Heart right ventricle (tissue), 16 donors: ENCODE measurements at regions of chr22 and their contacts with region 1.

Region 1: DNA sequence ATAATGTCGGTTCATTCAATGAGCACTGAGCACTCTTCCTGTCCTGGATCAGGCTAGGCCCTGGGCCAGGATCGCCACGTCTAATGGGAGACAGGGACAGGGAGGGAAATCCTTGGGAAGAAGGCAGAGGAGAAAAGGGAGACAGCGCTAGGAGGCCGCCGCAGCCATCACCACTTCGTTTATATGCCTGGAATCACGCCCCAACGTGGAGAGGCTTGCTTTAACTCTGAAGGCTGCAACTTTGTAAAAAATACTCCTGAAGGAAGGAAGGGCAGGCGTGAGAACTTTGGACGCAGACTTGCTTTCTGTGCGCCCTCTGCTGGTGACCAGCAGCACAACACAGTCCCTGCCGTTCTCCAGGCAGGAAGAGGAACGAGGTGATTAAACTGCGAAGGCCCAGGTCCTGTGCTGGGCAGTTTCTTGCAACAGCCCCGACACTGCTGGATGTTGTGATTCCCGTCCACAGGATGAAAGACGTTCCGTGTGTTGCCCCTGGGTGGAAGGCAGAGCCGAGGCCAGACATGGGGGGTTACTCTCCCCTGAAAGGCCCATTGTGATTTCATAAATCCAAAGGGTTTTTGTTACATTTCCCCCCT is 22.1 kb downstream of the RIBC2 start:
- DNase-seq: peak; percentile 87 to 89
- ATAC-seq: peak; percentile 90 to 97 (median 94)
- H3K4me3 ChIP-seq: peak overlapping the region in 5 of 10 donors; percentile 18 to 35 (median 31)
- H3K27ac ChIP-seq: peak overlapping the region in 8 of 10 donors; percentile 15 to 78 (median 60)
- H3K4me1 ChIP-seq: peaks cover 0 to 14% (median 8%) of the 10 kb centered on the region in 9 donors
- H3K27me3 ChIP-seq: peaks cover 0 to 9% (median 0%) of the 10 kb centered on the region in 7 donors
- CTCF ChIP-seq: peak; percentile 93 to 99 (median 96)

Region 2: DNA sequence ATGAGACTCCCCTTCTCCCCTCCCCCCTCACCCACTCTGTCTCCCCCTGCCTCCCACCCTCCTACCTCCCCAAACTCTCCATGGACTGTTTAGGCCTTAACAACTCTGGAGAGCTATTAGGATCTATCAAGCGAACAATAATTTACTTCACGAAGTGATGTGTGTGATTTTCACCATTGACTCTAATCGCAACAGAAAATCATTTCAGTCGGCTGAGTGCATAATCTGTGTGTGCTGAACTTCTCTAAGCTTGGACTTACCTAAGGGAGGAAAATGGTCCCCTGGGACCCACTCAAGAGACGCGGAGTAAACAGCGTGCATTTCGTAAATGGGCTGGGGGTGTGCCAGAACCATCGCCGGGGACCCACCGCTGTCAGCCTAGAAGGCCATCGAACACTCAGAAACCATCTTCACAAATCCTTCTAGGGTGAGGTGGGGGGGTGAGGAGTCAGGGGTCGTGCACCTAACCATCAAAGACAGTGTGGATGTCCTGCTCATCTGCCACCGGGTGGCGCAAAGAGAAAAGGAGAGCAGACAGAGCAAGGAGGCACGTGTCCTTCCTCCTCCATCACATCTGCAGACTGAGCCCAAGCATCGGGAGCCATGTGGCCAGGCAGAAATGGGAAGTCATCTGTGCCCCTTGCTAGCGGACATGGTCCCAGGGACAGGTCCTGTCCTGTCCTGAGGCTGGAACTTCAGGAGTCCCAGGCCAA is 334.0 kb before region 1 on chr22:
- intact Hi-C with region 1: loop called in 1 of 10 experiments (anchors 10 kb)
- DNase-seq: peak in 1 of 2 donors; percentile 41
- ATAC-seq: peak in 7 of 8 donors; percentile 22 to 79 (median 68)
- H3K4me3 ChIP-seq: no peak overlapping the region
- H3K27ac ChIP-seq: no peak overlapping the region
- H3K4me1 ChIP-seq: peaks cover 0 to 3% (median 0%) of the 10 kb centered on the region in 9 donors
- H3K27me3 ChIP-seq: peaks cover 0 to 81% (median 66%) of the 10 kb centered on the region in 7 donors
- CTCF ChIP-seq: peak in 7 of 9 donors; percentile 15 to 55 (median 35)

Region 3: GRCh38 chr22:45309472-45310227 is 126.0 kb before region 1 on chr22 and contains the start of gene FAM118A:
- intact Hi-C with region 1: loop called in 3 of 10 experiments (anchors 2 to 10 kb)
- DNase-seq: peak; percentile 91 to 96
- ATAC-seq: peak; percentile 95 to 97 (median 96)
- H3K4me3 ChIP-seq: peak within 1 kb of the TSS; percentile 63 to 99 (median 97)
- H3K27ac ChIP-seq: peak within 1 kb of the TSS; percentile 43 to 94 (median 86)
- H3K4me1 ChIP-seq: peaks cover 8 to 37% (median 28%) of the 10 kb centered on the region in 9 donors
- H3K27me3 ChIP-seq: no peaks in the 10 kb centered on the region
- CTCF ChIP-seq: peak in 2 of 9 donors; percentile 24 to 28
- total RNA-seq, gene FAM118A: 10.4 to 30.8 (median 16.3) TPM

Region 4: DNA sequence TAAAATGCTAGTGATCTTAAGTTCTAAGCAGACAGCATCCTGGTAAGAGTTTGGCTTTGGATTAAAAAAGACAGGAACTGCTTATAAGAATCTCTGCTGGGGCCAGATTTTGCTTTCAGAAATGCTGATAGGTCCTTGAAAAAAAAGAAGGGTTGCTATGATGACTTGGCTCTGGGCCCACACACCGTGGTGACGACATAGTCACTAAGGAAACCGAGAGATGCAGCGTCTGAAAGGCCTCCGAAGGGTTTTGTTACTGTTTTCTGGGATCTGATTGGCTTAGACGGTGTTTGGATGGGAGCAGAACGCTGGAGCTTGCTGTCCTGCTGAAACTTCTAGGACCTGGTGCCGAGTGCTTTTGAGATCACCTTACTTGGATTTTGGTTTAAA is 117.5 kb before region 1 on chr22:
- intact Hi-C with region 1: loop called in 4 of 10 experiments (anchors 5 to 10 kb)
- DNase-seq: peak; percentile 74 to 89
- ATAC-seq: peak in 7 of 8 donors; percentile 49 to 87 (median 75)
- H3K4me3 ChIP-seq: peak overlapping the region in 5 of 10 donors; percentile 11 to 29 (median 14)
- H3K27ac ChIP-seq: peak overlapping the region; percentile 4 to 91 (median 79)
- H3K4me1 ChIP-seq: peaks cover 3 to 71% (median 50%) of the 10 kb centered on the region in 9 donors
- H3K27me3 ChIP-seq: no peaks in the 10 kb centered on the region
- CTCF ChIP-seq: no peak

Region 5: DNA sequence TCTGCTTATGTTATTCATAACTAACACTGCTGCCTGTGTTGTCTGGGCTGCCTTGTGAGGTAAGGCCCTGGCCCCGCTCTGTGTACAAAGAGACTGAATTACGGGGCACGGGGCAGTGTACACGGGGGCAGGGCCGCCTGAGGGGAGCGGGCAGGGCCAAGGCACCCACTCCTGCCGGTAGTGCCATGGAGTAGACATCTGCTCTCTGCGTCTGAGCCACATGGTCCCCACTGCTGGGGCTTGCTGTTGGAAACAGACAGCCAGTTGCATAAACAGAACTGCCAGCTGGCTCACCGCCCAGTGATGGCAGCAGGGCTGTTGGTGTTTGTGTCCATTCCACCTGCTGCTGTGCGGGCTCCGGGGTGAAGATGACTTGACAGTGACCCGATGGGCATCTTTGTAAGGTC is 106.1 kb before region 1 on chr22:
- intact Hi-C with region 1: loop called in 1 of 10 experiments (anchors 10 kb)
- DNase-seq: peak; percentile 80 to 82
- ATAC-seq: peak; percentile 64 to 93 (median 84)
- H3K4me3 ChIP-seq: no peak overlapping the region
- H3K27ac ChIP-seq: peak overlapping the region in 9 of 10 donors; percentile 44 to 83 (median 61)
- H3K4me1 ChIP-seq: peaks cover 0 to 36% (median 20%) of the 10 kb centered on the region in 9 donors
- H3K27me3 ChIP-seq: no peaks in the 10 kb centered on the region
- CTCF ChIP-seq: no peak

Region 6: DNA sequence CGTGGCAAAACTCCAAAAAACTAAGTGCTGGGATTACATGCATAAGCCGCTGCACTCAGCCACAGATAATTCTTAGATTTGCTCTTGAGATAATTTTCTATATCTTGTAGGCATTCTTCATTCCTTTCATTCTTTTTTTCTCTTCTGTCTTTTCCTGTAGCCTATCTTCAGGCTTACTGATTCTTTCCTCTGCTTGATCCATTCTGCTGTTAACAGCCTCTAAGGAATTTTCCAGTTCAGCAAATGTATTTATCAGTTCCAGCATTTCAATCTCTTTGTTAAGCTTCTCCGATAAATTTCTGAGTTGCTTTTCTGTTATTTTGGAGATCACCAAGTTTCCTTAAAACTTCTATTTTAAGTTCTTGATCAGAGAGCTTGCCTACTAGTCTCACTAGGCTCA is 68.9 kb before region 1 on chr22:
- intact Hi-C with region 1: no loop called
- DNase-seq: no peak
- ATAC-seq: no peak
- H3K4me3 ChIP-seq: no peak overlapping the region
- H3K27ac ChIP-seq: no peak overlapping the region
- H3K4me1 ChIP-seq: no peaks in the 10 kb centered on the region
- H3K27me3 ChIP-seq: no peaks in the 10 kb centered on the region
- CTCF ChIP-seq: no peak